GM13976 (cell line): ENCODE measurements at regions of chr14 and their contacts with region 1.

Region 1: GRCh38 chr14:69252851-69253250 is 7.1 kb upstream of the GALNT16 start:
- DNase-seq: no peak
- CTCF ChIP-seq: no peak

Region 2: DNA sequence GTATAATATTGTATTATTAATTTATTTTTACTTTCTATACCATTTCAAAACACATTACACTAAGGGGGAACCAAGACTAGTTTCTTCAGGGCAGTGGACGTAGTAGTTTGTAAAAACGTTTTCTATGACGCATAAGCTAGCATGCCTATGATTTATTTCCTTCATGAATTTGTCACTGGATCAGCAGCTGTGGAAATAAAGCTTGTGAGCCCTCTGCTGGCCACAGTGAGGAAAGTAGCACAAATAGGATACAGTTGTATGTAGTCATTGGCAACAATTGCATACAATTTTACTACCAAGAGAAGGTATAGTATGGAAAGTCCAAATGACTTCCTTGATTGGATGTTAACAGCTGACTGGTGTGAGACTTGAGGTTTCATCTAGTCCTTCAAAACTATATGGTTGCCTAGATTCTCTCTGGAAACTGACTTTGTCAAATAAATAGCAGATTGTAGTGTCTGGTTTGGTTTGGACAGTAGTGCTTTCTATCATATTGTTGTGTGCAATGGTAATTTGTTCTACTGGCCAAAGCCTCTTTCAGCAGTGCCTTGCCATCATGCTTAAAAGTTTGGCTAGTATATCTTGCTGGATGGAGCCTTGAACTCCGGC is 207.3 kb after region 1 on chr14:
- in situ Hi-C with region 1: loop called (anchors 5 kb)
- DNase-seq: peak; percentile 70
- CTCF ChIP-seq: peak; percentile 69